ENCODE measurements at regions of chr7 and their contacts with region 1.

Region 1: DNA sequence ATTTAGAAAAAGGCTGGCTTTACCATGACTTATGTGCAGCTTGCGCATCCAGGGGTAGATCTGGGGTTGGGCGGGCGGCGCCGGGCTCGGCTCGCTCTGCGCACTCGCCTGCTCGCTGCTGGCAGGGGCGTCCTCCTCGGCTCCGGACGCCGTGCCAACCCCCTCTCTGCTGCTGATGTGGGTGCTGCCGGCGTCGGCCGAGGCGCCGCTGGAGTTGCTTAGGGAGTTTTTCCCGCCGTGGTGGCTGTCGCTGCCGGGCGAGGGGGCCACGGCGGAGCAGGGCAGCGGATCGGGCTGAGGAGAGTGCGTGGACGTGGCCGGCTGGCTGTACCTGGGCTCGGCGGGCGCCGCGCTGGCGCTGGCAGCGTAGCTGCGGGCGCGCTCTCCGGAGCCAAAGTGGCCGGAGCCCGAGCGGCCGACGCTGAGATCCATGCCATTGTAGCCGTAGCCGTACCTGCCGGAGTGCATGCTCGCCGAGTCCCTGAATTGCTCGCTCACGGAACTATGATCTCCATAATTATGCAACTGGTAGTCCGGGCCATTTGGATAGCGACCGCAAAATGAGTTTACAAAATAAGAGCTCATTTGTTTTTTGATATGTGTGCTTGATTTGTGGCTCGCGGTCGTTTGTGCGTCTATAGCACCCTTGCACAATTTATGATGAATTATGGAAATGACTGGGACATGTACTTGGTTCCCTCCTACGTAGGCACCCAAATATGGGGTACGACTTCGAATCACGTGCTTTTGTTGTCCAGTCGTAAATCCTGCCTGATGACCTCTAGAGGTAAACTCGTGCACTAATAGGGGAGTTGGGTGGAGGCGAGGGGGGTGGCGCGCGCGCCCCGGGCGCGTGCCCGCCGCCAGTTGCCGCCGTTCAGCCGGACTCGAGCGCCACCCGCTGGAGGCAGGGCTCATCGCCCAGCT is at the start of gene HOXA5:
- DNase-seq: no peak
- H3K4me3 ChIP-seq: peak within 1 kb of the TSS; percentile 50
- H3K27me3 ChIP-seq: no peaks in the 10 kb centered on the region
- CTCF ChIP-seq: no peak; the same call in 1 of the 2 replicates
- polyA plus RNA-seq, gene HOXA5: 1.2 and 1.7 TPM in 2 replicates

Region 2: GRCh38 chr7:26681819-26682418 is 461.4 kb before region 1 on chr7:
- CTCF ChIA-PET with region 1: interaction called, 43 read pairs
- POLR2A ChIA-PET with region 1: no interaction called
- DNase-seq: no peak
- H3K4me3 ChIP-seq: no peak overlapping the region
- H3K27me3 ChIP-seq: no peaks in the 10 kb centered on the region
- CTCF ChIP-seq: peak; percentile 66

Region 3: GRCh38 chr7:26853788-26854393 is 289.4 kb before region 1 on chr7:
- CTCF ChIA-PET with region 1: interaction called, 59 read pairs
- POLR2A ChIA-PET with region 1: no interaction called
- DNase-seq: no peak
- H3K4me3 ChIP-seq: no peak overlapping the region
- H3K27me3 ChIP-seq: no peaks in the 10 kb centered on the region
- CTCF ChIP-seq: peak; percentile 64

Region 4: DNA sequence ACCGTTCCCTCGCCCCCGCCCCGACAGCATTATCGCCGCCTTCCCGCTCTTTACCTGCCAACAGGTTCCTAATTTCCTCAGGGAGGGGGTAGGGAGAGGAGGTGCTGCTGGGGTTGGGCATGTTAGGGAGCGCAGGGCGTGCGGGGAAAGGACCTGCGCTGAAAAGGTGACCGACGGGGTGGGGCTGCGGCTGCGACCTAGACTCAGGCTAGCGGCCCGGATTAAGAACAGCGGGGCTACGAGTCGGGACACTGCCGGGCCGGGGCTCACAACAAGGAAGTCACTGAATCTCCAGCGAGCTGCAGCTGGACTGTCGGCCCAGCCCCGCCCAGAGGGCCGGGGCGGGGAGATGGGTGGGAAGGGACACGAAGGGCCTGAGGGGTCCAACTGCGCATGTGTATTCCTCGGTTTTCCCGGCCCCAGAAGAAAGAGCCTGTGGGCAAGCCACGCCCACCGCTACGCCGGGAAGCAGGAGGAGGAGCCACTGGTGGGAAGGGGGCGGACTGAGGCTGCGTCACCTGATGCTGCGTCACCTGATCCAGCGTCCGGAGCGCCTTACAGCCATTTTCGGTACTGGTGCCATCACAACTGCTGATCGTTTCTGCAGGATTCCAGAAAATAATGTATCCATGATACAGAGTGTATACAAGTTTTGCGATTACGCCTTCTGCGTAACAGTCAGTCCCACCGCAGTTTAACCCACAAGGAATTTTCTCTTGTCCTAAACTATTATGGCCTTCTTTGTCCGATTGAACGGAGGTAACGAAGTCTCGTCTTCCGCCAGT is 278.8 kb before region 1 on chr7 and contains the start of gene SKAP2:
- CTCF ChIA-PET with region 1: interaction called, 11 read pairs
- POLR2A ChIA-PET with region 1: no interaction called
- DNase-seq: peak; percentile 95
- H3K4me3 ChIP-seq: peak within 1 kb of the TSS; percentile 87
- H3K27me3 ChIP-seq: no peaks in the 10 kb centered on the region
- CTCF ChIP-seq: no peak
- polyA plus RNA-seq, gene SKAP2: 2.7 and 5.2 TPM in 2 replicates

Region 5: GRCh38 chr7:27117887-27118491 is 25.3 kb before region 1 on chr7:
- CTCF ChIA-PET with region 1: no interaction called
- POLR2A ChIA-PET with region 1: no interaction called
- DNase-seq: no peak
- H3K4me3 ChIP-seq: no peak overlapping the region
- H3K27me3 ChIP-seq: peaks cover 10% of the 10 kb centered on the region; the same call in 1 of the 2 replicates
- CTCF ChIP-seq: no peak

Region 6: GRCh38 chr7:27130540-27131389 is 12.5 kb before region 1 on chr7 and contains the start of gene HOXA4:
- CTCF ChIA-PET with region 1: interaction called, 15 read pairs
- POLR2A ChIA-PET with region 1: no interaction called
- DNase-seq: no peak
- H3K4me3 ChIP-seq: peak within 1 kb of the TSS; percentile 78
- H3K27me3 ChIP-seq: no peaks in the 10 kb centered on the region
- CTCF ChIP-seq: no peak
- polyA plus RNA-seq, gene HOXA4: 1.2 and 1.3 TPM in 2 replicates

Region 7: DNA sequence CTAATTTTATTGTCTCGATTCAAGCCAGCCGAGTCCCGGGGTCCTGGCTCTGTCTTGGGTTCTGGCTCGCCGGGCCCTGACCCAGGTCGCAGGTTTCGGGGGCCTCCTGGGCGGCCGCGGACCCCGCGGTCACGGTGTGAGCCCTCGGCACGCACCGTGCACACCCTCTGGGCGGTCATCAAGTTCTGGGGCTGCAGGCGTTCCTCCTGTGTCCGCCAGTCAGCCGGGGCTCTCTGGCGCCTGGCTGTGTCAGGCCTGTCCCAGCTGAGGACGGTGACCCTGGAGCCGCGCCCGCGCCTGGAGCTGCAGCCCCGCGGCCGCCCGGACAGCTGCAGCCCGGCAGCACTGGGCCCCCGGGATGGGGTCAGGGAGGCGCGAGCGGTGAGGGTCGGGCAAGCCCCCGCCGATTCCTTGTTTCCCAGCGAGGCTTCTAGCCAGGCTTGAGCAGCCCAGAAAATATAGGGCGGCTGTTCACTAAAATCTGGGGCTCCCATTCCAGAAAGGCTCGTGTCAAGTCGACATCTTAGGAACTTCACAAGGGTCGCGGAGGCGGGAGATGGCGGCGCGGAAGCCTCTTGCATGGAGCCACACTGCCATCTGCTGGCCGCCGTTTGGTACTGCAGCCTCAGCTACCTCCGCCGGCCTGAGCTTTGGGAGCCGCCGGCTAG is 17.4 kb after region 1 on chr7:
- CTCF ChIA-PET with region 1: interaction called, 74 read pairs
- POLR2A ChIA-PET with region 1: interaction called, 4 read pairs
- DNase-seq: no peak
- H3K4me3 ChIP-seq: peak overlapping the region; percentile 72
- H3K27me3 ChIP-seq: no peaks in the 10 kb centered on the region
- CTCF ChIP-seq: peak; percentile 98